ENCODE measurements at regions of chr2 and their contacts with region 1.

Region 1: DNA sequence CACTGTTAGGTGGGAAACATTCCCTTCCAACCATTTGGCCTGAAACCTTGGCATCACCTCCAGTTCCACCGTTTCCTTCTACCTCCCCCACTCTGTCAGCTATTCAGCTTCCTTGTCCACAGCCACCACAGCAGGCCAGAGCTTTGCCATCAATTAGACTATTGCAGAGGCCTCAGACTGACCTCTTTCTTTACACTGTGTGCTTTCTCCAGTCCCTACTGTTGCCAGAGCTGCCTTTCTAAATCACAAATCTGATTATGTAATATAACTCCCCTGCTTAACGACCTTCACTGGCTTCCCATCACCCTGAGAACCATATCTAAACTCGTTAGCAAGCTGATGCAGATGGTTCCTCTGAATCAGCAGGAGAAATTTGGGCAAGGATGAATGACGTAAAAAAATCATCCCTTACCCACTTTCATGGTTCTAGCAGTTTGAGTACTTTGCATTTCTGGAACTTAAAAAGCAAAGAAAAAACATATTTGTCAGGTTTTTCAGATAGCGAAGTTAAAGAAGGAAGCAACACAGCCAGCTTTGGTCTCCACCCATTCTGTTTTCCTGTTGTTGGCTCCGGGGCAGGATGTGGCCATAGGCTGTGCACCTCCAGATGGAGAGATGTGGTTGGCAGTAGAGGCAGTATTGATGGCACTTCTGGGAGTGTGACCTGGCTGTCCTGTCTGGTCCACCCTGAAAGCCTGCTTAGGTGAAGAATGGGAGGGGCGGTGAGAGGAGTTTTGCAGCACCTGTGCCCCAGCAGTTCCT is 422.1 kb downstream of the PARD3B start:
- DNase-seq: peak; percentile 10 to 86 (median 83)
- ATAC-seq: peak; percentile 78
- H3K4me3 ChIP-seq: peak overlapping the region; percentile 37
- H3K4me3 Mint-ChIP-seq: peak overlapping the region; percentile 51 to 89 (median 70)
- H3K27ac ChIP-seq: peak overlapping the region; percentile 58
- H3K27ac Mint-ChIP-seq: peak overlapping the region; percentile 91 to 100 (median 98)
- H3K4me1 ChIP-seq: peaks cover 26 to 67% of the 10 kb centered on the region in 2 donors
- H3K4me1 Mint-ChIP-seq: peaks cover 36 to 80% (median 70%) of the 10 kb centered on the region in 7 donors
- H3K27me3 ChIP-seq: no peaks in the 10 kb centered on the region
- H3K27me3 Mint-ChIP-seq: no peaks in the 10 kb centered on the region

Region 2: DNA sequence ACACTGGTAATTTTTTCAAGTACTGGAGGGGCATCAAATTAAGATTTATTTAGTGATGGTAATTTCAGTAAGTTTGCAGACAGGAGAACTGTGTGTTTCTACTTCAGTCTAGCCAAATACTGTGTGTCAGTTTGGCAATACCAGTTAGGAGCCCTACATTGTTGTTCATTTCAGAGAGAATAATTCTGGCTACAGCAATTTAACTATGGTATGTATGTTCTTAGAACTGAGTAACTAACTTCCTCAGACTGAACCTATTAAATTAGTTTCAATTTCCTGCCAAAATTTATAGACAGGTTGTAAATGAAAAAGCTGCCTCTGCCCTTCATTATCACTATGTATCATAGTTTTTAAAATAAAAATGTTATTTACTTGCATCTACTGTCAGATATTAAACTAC is 89.7 kb before region 1 on chr2:
- CTCF ChIA-PET with region 1: interaction called, 8 read pairs
- POLR2A ChIA-PET with region 1: interaction called, 21 read pairs
- intact Hi-C with region 1: loop called (anchors 1 to 5 kb)
- DNase-seq: peak in 1 of 9 donors; percentile 11
- ATAC-seq: no peak
- H3K4me3 ChIP-seq: no peak overlapping the region
- H3K4me3 Mint-ChIP-seq: peak overlapping the region in 7 of 10 donors; percentile 8 to 47 (median 37)
- H3K27ac ChIP-seq: no peak overlapping the region
- H3K27ac Mint-ChIP-seq: peak overlapping the region; percentile 5 to 82 (median 65)
- H3K4me1 ChIP-seq: peaks cover 0 to 50% of the 10 kb centered on the region in 2 donors
- H3K4me1 Mint-ChIP-seq: peaks cover 21 to 92% (median 83%) of the 10 kb centered on the region in 7 donors
- H3K27me3 ChIP-seq: no peaks in the 10 kb centered on the region
- H3K27me3 Mint-ChIP-seq: no peaks in the 10 kb centered on the region

Region 3: DNA sequence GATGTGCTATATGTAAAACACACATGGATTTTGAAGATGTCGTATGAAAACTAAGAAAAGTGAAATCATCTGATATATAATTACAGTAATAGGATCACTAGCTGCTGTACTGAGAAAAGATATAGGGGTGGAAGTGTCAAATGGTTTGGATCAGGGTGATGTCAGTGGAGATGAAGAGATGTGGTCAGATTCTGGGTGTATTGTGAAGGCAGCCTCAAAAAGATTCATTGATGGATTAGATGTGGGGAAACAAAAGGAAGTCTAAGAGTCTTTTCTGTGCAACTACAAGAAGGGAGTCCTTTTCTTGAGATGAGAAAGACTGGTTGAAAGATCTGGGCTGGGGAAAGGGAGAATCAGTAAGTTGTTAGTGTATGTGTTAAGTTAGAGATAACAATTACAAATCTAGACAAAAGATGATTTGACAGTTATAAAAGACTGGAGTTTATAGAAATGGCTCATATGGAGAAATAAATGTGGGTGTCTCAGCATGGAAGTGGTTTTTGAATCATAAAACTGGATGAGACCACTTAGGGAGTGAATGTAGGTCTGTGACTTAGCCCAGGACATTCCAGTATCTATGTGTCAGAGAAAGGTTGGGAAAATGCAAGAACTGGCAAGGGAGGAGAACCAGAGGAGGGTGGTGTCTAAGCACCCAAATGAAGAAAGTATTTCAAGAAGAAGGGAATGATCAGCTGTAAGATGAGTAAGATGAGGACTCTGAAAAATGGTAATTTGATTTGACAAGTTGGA is 74.7 kb before region 1 on chr2:
- CTCF ChIA-PET with region 1: no interaction called
- POLR2A ChIA-PET with region 1: interaction called, 5 read pairs
- intact Hi-C with region 1: loop called in 1 of 2 experiments (anchors 5 kb)
- DNase-seq: no peak
- ATAC-seq: peak; percentile 60
- H3K4me3 ChIP-seq: no peak overlapping the region
- H3K4me3 Mint-ChIP-seq: no peak overlapping the region
- H3K27ac ChIP-seq: no peak overlapping the region
- H3K27ac Mint-ChIP-seq: no peak overlapping the region
- H3K4me1 ChIP-seq: peaks cover 0 to 19% of the 10 kb centered on the region in 2 donors
- H3K4me1 Mint-ChIP-seq: peaks cover 4 to 19% (median 11%) of the 10 kb centered on the region in 7 donors
- H3K27me3 ChIP-seq: no peaks in the 10 kb centered on the region
- H3K27me3 Mint-ChIP-seq: no peaks in the 10 kb centered on the region

Region 4: DNA sequence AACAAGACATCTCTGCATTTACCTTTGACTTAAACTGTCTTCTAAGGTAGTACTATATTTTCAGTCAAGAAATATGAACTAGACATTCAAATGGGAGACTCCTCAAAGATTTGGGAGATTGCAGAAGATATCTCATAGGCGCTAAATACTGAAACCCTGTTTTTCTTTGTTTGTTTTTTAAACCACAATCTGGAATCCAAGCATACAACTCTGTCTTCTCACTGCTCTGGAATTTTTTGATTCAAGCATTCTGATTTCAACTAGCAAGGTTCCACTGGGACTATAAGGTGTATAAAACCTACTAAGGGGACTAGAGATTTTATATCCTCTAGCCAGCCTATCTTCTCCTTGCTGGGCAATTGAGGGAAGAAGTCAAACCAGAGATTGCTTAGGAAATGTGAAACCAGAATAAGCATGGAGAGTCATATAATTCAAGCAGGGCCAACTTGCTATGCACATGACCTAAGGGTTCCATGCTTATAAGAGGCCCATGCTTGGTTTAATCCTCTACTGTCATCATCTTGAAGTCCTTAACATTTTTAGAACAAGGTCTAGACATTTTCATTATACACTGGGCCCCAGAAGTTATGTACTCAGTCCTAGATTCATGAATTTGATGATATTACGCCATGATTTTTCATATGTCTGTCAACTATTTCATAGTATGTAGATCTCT is 16.6 kb before region 1 on chr2:
- CTCF ChIA-PET with region 1: no interaction called
- POLR2A ChIA-PET with region 1: interaction called, 31 read pairs
- intact Hi-C with region 1: loop called (anchors 1 kb)
- DNase-seq: no peak
- ATAC-seq: no peak
- H3K4me3 ChIP-seq: no peak overlapping the region
- H3K4me3 Mint-ChIP-seq: peak overlapping the region in 1 of 10 donors; percentile 24
- H3K27ac ChIP-seq: no peak overlapping the region
- H3K27ac Mint-ChIP-seq: peak overlapping the region in 7 of 9 donors; percentile 27 to 84 (median 73)
- H3K4me1 ChIP-seq: peaks cover 6 to 37% of the 10 kb centered on the region in 2 donors
- H3K4me1 Mint-ChIP-seq: peaks cover 30 to 76% (median 64%) of the 10 kb centered on the region in 7 donors
- H3K27me3 ChIP-seq: no peaks in the 10 kb centered on the region
- H3K27me3 Mint-ChIP-seq: no peaks in the 10 kb centered on the region

Region 5: DNA sequence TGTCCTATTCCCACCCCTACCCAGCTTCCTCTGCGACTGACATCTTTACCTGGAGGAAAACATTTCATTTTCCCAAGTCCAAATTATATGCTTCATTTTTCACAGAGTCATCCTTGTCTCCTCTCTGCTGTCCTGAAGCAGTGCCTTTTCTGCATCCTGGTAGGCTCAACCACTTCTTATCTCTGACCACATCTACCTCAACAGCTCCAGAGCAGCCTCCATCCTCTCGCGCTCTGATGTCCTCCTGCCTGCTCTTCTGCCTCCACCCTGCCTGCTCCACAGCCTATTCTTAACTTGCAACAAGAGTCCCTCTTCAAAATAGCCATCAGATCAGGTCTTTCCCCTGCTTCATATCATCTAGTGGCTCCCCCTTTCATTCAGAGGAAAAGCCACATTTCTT is 35.0 kb after region 1 on chr2:
- CTCF ChIA-PET with region 1: no interaction called
- POLR2A ChIA-PET with region 1: interaction called, 3 read pairs
- intact Hi-C with region 1: loop called (anchors 5 kb)
- DNase-seq: peak in 4 of 9 donors; percentile 6 to 38 (median 20)
- ATAC-seq: no peak
- H3K4me3 ChIP-seq: no peak overlapping the region
- H3K4me3 Mint-ChIP-seq: peak overlapping the region; percentile 10 to 75 (median 32)
- H3K27ac ChIP-seq: no peak overlapping the region
- H3K27ac Mint-ChIP-seq: peak overlapping the region in 5 of 9 donors; percentile 1 to 74 (median 34)
- H3K4me1 ChIP-seq: peaks cover 0 to 14% of the 10 kb centered on the region in 2 donors
- H3K4me1 Mint-ChIP-seq: peaks cover 18 to 43% (median 36%) of the 10 kb centered on the region in 7 donors
- H3K27me3 ChIP-seq: no peaks in the 10 kb centered on the region
- H3K27me3 Mint-ChIP-seq: no peaks in the 10 kb centered on the region

Region 6: DNA sequence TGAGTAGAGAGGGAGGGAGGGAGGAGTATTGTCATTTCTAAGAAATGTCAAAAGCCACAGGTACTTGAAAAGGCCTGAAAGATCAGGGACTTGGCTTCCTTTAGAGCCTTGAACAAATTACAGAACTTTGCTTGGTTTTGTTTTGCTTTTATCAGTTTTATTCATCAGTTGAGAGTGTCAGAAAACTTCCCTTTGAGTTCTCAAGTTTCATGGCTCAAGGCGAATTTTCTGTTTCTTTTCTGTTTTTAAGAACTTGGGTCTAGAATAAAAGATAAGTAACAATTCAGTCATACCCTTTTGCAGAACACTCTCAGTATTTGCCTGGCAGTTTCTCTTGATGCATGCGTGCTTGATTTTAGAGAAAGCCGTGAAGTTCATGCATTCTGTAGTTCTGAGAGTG is 109.8 kb after region 1 on chr2:
- CTCF ChIA-PET with region 1: interaction called, 3 read pairs
- POLR2A ChIA-PET with region 1: interaction called, 5 read pairs
- intact Hi-C with region 1: loop called (anchors 1 to 2 kb)
- DNase-seq: peak in 7 of 9 donors; percentile 41 to 85 (median 73)
- ATAC-seq: peak; percentile 86
- H3K4me3 ChIP-seq: no peak overlapping the region
- H3K4me3 Mint-ChIP-seq: peak overlapping the region; percentile 38 to 81 (median 70)
- H3K27ac ChIP-seq: peak overlapping the region; percentile 72
- H3K27ac Mint-ChIP-seq: peak overlapping the region; percentile 81 to 99 (median 94)
- H3K4me1 ChIP-seq: peaks cover 0 to 30% of the 10 kb centered on the region in 2 donors
- H3K4me1 Mint-ChIP-seq: peaks cover 23 to 82% (median 73%) of the 10 kb centered on the region in 7 donors
- H3K27me3 ChIP-seq: no peaks in the 10 kb centered on the region
- H3K27me3 Mint-ChIP-seq: no peaks in the 10 kb centered on the region